Activated T-helper 1 cell treated with anti-CD3 and anti-CD28 coated beads, Interleukin-12 subunit alpha, Interleukin-12 subunit beta, Interleukin-2, Interleukin-4 antibody, amounts not matched to agents 30 ng/mL and 10 ng/mL and 1 ng/mL, durations not matched to agents 14 hours and 24 hours and 36 hours (primary cell): ENCODE measurements at regions of chr17 and their contacts with region 1.

Region 1: DNA sequence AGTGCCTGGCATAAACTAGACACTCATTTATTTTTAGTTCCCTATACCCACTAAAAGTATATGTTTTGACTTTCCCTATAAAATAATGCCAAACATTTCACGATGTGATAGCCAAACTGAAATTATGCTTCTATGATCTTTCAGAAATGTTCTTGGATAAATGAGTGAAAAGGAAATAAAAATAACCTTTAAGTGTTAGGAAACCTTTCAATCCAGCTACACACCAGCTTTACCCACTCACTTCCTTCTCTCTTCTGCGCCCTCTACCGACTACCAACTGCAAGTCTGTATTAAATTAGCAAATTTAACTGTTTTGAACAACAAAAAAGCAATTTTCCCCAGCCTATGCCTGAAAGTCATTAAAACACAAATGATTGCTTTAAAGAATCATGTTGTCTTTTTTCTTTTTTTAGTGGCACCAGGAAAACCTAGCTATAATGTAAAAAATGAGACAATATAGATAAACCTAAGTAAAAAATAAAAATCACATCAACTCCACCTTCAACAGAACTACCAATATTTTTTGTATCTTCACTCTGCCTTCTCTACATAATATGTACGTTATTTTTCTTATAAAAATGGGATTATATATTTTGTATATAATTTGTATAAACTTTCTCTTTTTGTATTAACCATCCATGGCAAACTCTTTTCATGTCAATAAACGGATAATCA is 13.2 kb upstream of the TMEM100 start:
- DNase-seq: peak; percentile 6
- H3K4me3 Mint-ChIP-seq: no peak overlapping the region
- H3K27ac Mint-ChIP-seq: no peak overlapping the region
- H3K4me1 Mint-ChIP-seq: peaks cover 21% of the 10 kb centered on the region
- H3K27me3 Mint-ChIP-seq: peaks cover 14% of the 10 kb centered on the region

Region 2: GRCh38 chr17:55341432-55341831 is 394.4 kb before region 1 on chr17:
- intact Hi-C with region 1: loop called (anchors 1 kb)
- DNase-seq: no peak
- H3K4me3 Mint-ChIP-seq: no peak overlapping the region
- H3K27ac Mint-ChIP-seq: no peak overlapping the region
- H3K4me1 Mint-ChIP-seq: peaks cover 46% of the 10 kb centered on the region
- H3K27me3 Mint-ChIP-seq: peaks cover 28% of the 10 kb centered on the region

Region 3: GRCh38 chr17:55576996-55577586 is 158.8 kb before region 1 on chr17:
- intact Hi-C with region 1: loop called (anchors 1 kb)
- DNase-seq: peak; percentile 14
- H3K4me3 Mint-ChIP-seq: no peak overlapping the region
- H3K27ac Mint-ChIP-seq: no peak overlapping the region
- H3K4me1 Mint-ChIP-seq: peaks cover 5% of the 10 kb centered on the region
- H3K27me3 Mint-ChIP-seq: peaks cover 17% of the 10 kb centered on the region

Region 4: GRCh38 chr17:55717898-55718735 is 17.8 kb before region 1 on chr17:
- intact Hi-C with region 1: loop called (anchors 2 kb)
- DNase-seq: peak; percentile 31
- H3K4me3 Mint-ChIP-seq: no peak overlapping the region
- H3K27ac Mint-ChIP-seq: no peak overlapping the region
- H3K4me1 Mint-ChIP-seq: no peaks in the 10 kb centered on the region
- H3K27me3 Mint-ChIP-seq: peaks cover 16% of the 10 kb centered on the region

Region 5: GRCh38 chr17:55750750-55751657 is 15.1 kb after region 1 on chr17 and contains the start of gene PCTP:
- intact Hi-C with region 1: loop called (anchors 1 kb)
- DNase-seq: peak; percentile 85
- H3K4me3 Mint-ChIP-seq: peak within 1 kb of the TSS; percentile 87
- H3K27ac Mint-ChIP-seq: peak within 1 kb of the TSS; percentile 2
- H3K4me1 Mint-ChIP-seq: peaks cover 12% of the 10 kb centered on the region
- H3K27me3 Mint-ChIP-seq: peaks cover 23% of the 10 kb centered on the region
- total RNA-seq, gene PCTP: 7.7 and 8.4 TPM in 2 replicates

Region 6: DNA sequence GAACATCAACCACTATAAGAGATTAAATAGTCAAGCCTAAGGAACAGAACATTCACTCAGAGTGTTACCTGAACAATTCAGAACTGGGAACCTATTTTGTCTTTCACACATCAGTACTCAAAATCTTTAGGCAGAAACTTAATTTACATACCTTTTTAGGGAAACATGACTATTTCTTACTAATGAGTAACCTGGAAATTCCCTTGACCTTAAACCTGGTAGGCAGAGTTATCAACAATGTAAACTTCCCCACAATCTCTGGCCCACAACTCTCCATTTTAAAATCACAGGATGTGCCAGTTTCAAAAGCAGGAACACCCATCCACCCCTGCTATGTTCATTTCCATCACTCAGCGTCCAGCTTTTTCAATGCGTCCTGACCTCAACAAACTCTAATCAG is 284.5 kb after region 1 on chr17:
- intact Hi-C with region 1: loop called (anchors 2 kb)
- DNase-seq: no peak
- H3K4me3 Mint-ChIP-seq: no peak overlapping the region
- H3K27ac Mint-ChIP-seq: peak overlapping the region; percentile 27
- H3K4me1 Mint-ChIP-seq: peaks cover 30% of the 10 kb centered on the region
- H3K27me3 Mint-ChIP-seq: peaks cover 2% of the 10 kb centered on the region